Panc1 (cell line): ENCODE measurements at regions of chr3 and their contacts with region 1.

Region 1: DNA sequence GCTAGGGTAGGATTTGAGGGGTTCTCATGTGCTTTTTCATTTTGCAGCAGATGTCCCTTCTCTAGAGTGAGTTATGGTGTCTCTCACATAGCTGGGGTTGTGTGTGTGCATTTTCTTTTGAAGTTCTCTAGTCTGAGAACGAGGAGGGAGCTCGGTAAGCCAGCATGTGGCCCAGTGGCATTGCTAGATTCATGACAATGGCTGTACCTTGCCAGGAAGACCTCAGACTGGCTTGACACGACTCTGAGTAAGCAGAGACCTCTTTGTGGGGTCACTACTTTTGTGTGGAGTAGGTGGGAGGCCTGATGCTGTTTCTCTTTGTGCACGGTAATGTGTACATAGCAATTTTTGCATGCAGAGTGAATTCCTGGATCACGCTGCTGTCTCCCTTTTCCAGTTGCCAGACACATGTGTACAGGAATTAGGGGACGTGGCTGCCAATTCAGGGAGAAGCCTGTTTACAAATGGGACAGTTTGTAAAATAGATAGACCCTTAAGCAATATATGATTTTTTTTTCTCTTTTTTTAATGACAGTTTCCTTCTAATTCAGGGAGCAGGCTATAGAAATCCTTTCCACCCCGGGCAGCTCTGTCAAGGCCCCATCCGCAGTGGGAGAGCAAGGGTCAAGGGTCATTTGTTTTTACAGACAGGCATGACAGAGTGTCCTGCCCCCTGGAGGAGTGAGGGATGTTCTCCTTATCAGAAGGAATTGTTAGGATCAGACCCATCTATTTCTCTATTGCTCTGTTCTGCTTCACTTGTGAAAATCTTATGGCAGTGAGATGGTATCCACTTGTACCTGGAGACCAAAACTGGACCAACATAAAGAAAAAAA is 4.6 kb downstream of the CACNA1D start:
- DNase-seq: no peak
- ATAC-seq: no peak
- H3K4me3 ChIP-seq: peak overlapping the region in 1 of 2 experiments; percentile 11; a peak in 1 of 4 replicates
- H3K27ac ChIP-seq: peak overlapping the region; percentile 68
- H3K4me1 ChIP-seq: peaks cover 32% of the 10 kb centered on the region
- H3K27me3 ChIP-seq: no peaks in the 10 kb centered on the region
- CTCF ChIP-seq: no peak

Region 2: DNA sequence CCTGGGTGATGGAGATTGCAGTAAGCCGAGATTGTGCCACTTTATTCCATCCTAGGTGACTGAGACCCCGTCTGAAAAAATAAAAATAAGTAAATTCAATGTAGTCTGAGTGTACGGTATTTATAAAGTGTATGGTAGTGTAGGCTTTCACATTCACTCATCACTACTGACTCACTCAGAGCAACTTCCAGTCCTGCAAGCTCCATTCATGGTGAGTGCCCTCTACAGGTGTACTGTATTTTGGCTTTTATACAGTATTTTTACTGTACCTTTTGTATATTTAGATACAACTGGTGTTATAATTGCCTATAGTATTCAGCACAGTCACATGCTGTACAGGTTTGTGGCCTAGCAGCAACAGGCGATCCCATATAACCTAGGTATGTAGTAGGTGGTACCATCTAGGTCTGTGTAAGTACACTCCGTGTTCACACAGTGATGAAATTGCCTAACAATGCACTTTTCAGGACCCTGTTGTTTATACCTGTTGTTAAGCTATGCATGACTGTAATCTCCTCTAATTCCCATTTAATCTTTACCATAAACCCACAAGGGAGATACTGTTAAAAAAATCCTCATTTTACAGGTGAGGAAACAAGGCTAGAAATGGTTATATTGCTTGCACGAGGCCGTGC is 14.6 kb after region 1 on chr3:
- CTCF ChIA-PET with region 1: interaction called, 10 read pairs
- POLR2A ChIA-PET with region 1: no interaction called
- in situ Hi-C with region 1: no loop called
- intact Hi-C with region 1: no loop called
- DNase-seq: no peak
- ATAC-seq: no peak
- H3K4me3 ChIP-seq: no peak overlapping the region
- H3K27ac ChIP-seq: no peak overlapping the region; the same call in 1 of the 2 replicates
- H3K4me1 ChIP-seq: peaks cover 16% of the 10 kb centered on the region
- H3K27me3 ChIP-seq: no peaks in the 10 kb centered on the region
- CTCF ChIP-seq: peak; percentile 40; the same call in 1 of the 2 replicates

Region 3: DNA sequence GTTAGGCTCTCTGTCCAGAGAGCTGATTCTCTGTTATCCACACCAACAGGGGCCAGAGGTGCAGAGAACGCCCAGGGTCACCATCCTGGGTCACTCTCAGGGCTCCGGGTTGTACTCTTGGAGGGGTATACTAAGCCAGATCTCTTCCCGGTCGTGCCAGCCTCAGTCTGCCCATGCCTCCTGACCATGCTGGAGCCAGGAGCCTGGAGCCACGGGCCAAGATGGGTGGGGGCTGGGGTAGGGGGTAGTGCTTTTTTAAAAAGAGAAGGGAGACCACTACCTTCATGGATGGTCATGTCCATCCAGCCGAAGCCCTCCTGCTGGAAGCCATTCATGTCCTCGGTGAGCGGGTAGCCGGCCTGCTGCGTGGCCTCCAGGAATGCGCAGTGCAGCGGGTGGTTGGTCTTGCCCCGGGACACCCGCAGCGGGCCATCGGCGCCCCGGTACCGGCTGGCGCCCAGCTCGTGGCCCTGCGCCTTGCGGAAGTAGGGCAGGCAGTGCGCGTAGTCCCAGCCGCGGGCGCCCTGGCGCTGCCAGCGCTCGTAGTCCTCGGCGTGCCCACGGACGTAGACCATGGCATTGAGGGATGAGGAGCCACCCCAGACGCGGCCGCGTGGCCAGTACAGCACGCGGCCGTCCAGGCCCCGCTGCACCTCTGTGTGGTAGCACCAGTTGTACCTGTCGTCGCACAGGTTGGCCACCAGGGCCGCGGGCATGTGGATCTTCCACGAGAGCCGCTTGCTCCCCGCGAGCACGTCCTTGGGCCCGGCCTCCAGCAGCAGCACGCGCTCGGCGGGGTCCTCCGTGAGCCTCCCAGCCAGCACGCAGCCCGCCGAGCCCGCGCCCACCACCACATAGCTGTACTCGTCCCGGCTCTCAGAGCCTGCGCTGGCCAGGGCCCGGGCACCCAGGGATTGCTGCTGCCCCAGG is 324.3 kb after region 1 on chr3:
- CTCF ChIA-PET with region 1: no interaction called
- POLR2A ChIA-PET with region 1: no interaction called
- in situ Hi-C with region 1: no loop called
- intact Hi-C with region 1: no loop called
- DNase-seq: no peak
- ATAC-seq: no peak; the same call in 1 of the 2 replicates
- H3K4me3 ChIP-seq: no peak overlapping the region
- H3K27ac ChIP-seq: no peak overlapping the region
- H3K4me1 ChIP-seq: no peaks in the 10 kb centered on the region
- H3K27me3 ChIP-seq: no peaks in the 10 kb centered on the region
- CTCF ChIP-seq: no peak

Region 4: GRCh38 chr3:53833700-53834099 is 334.7 kb after region 1 on chr3:
- CTCF ChIA-PET with region 1: no interaction called
- POLR2A ChIA-PET with region 1: interaction called, 14 read pairs
- in situ Hi-C with region 1: no loop called
- intact Hi-C with region 1: no loop called
- DNase-seq: no peak
- ATAC-seq: no peak
- H3K4me3 ChIP-seq: no peak overlapping the region
- H3K27ac ChIP-seq: no peak overlapping the region
- H3K4me1 ChIP-seq: no peaks in the 10 kb centered on the region
- H3K27me3 ChIP-seq: no peaks in the 10 kb centered on the region
- CTCF ChIP-seq: no peak